Common myeloid progenitor, CD34-positive (primary cell): ENCODE measurements at regions of chr15 and their contacts with region 1.

Region 1: DNA sequence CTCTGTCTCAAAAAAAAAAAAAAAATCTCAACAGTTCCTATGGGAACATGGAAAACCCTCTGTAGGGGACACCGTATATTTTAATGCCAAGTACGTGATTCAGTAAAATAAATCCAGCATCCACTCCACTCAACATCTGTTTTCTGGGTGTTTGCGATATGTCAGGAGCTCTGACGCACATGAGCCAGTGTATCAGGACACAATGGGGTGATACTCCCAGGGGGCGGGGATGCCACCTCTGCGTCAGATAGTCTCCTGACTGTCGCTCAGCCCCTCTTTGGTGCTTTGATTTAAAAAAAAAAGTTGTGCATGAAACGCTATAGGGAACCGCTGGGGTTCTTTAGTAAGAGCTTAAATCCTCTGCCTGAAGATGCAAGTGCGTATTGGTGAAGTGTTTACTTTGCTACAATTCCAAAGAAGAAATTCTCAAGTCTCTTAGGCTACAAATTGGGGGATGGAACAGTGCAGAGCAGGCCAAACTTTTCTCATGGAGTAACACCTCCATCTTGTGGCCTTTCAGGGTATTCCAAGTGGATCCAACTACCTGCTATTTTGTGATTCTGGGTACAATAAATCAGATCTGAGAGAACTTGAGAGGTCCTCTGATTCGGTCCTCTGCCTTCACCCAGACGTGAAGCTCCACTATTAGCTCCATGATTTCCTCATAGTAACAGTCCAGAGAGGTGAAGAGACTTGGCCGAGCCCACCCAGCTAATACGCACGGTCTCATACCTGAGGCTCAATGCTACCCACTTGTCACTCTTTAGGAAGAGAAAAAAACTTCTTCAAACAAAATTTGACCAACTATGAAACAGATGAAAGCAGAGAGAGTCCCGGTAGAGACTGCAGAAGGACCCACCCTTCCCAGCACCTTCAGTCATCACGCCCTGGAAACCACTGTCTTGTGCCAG is 9.3 kb upstream of the NR2E3 start:
- DNase-seq: peak; percentile 56 to 81 (median 73)
- H3K4me3 ChIP-seq: no peak overlapping the region
- H3K27ac ChIP-seq: no peak overlapping the region
- H3K4me1 ChIP-seq: peaks cover 0 to 4% (median 2%) of the 10 kb centered on the region in 4 experiments
- H3K27me3 ChIP-seq: no peaks in the 10 kb centered on the region

Region 2: GRCh38 chr15:71737761-71738160 is 63.3 kb before region 1 on chr15:
- CTCF ChIA-PET with region 1: interaction called, 41 read pairs
- POLR2A ChIA-PET with region 1: no interaction called
- DNase-seq: no peak
- H3K4me3 ChIP-seq: no peak overlapping the region
- H3K27ac ChIP-seq: no peak overlapping the region
- H3K4me1 ChIP-seq: no peaks in the 10 kb centered on the region
- H3K27me3 ChIP-seq: peaks cover 0 to 12% (median 0%) of the 10 kb centered on the region in 5 experiments

Region 3: GRCh38 chr15:71743861-71744382 is 57.2 kb before region 1 on chr15:
- CTCF ChIA-PET with region 1: interaction called, 41 read pairs
- POLR2A ChIA-PET with region 1: no interaction called
- DNase-seq: peak; percentile 50 to 72 (median 58)
- H3K4me3 ChIP-seq: no peak overlapping the region
- H3K27ac ChIP-seq: no peak overlapping the region
- H3K4me1 ChIP-seq: no peaks in the 10 kb centered on the region
- H3K27me3 ChIP-seq: peaks cover 0 to 3% (median 0%) of the 10 kb centered on the region in 5 experiments

Region 4: DNA sequence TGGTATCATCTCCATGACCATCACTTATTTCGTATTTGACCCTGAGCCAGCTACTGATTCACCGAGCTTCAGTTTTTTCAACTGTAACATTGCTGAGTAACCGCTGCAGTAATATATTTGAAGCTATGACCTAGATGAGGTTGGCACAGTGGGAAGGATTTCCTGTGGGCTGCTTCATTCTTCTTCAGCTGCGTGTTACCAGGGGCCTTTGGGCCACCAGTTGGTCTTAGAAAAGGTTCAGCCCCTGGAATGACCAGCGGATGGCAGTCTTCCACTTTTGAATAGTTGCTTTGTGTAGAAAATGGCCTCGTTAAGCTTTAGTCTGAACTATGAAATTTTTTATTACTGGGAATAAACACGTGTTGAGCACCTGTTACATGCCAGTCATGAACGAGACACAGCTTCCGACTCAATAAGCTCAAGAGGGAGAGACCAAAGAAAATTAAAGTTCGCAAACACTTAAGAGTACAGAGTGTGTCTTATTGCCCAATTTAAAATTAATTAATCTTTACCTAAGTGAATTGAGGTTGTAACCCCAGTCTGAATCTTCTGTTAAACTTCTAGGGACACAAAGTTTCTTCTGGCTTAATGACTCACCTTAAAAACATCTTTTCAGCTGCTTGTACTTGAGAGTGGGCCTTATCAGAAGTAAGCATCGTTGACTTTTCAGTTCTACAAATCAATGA is 48.3 kb before region 1 on chr15:
- CTCF ChIA-PET with region 1: interaction called, 15 read pairs
- POLR2A ChIA-PET with region 1: no interaction called
- DNase-seq: peak; percentile 63 to 70 (median 66)
- H3K4me3 ChIP-seq: no peak overlapping the region
- H3K27ac ChIP-seq: no peak overlapping the region
- H3K4me1 ChIP-seq: peaks cover 0 to 8% (median 2%) of the 10 kb centered on the region in 4 experiments
- H3K27me3 ChIP-seq: peaks cover 0 to 9% (median 0%) of the 10 kb centered on the region in 5 experiments